ENCODE measurements at regions of chr18 and their contacts with region 1.

Region 1: DNA sequence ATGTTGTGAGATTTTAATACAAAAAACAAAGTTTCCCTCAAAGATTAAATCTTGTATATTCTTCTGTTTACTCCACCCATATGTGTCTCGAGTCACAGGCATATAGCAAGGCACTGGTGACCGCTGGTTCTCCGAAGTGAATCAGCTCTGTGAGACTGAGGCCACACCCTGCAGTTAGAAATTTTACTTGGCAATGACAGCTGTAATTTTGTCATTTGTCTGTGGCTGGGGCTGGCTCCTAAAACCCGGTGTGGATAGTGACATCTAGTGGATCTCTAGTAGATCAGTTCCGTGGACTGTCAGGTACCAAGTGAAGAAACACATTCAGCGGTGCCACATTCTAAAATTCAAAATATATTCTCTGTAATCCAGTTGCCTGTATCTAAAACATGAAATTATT is 278.0 kb downstream of the NEDD4L start:
- DNase-seq: peak; percentile 55
- H3K4me3 Mint-ChIP-seq: no peak overlapping the region
- H3K27ac Mint-ChIP-seq: no peak overlapping the region
- H3K4me1 Mint-ChIP-seq: peaks cover 4% of the 10 kb centered on the region
- H3K27me3 Mint-ChIP-seq: peaks cover 8% of the 10 kb centered on the region

Region 2: GRCh38 chr18:58180738-58181353 is 141.1 kb before region 1 on chr18:
- intact Hi-C with region 1: loop called (anchors 2 kb)
- DNase-seq: peak; percentile 17
- H3K4me3 Mint-ChIP-seq: no peak overlapping the region
- H3K27ac Mint-ChIP-seq: no peak overlapping the region
- H3K4me1 Mint-ChIP-seq: no peaks in the 10 kb centered on the region
- H3K27me3 Mint-ChIP-seq: peaks cover 2% of the 10 kb centered on the region

Region 3: GRCh38 chr18:58297198-58297597 is 24.8 kb before region 1 on chr18:
- intact Hi-C with region 1: loop called (anchors 1 kb)
- DNase-seq: no peak
- H3K4me3 Mint-ChIP-seq: no peak overlapping the region
- H3K27ac Mint-ChIP-seq: peak overlapping the region; percentile 10
- H3K4me1 Mint-ChIP-seq: peaks cover 15% of the 10 kb centered on the region
- H3K27me3 Mint-ChIP-seq: peaks cover 31% of the 10 kb centered on the region